Activated T-helper 2 cell treated with anti-CD3 and anti-CD28 coated beads, Interferon-gamma antibody, Interleukin-2, Interleukin-4, amounts not matched to agents 10 μg/mL and 5 μg/mL and 100 μg/mL, durations not matched to agents 14 hours and 24 hours and 36 hours (primary cell): ENCODE measurements at regions of chr2 and their contacts with region 1.

Region 1: DNA sequence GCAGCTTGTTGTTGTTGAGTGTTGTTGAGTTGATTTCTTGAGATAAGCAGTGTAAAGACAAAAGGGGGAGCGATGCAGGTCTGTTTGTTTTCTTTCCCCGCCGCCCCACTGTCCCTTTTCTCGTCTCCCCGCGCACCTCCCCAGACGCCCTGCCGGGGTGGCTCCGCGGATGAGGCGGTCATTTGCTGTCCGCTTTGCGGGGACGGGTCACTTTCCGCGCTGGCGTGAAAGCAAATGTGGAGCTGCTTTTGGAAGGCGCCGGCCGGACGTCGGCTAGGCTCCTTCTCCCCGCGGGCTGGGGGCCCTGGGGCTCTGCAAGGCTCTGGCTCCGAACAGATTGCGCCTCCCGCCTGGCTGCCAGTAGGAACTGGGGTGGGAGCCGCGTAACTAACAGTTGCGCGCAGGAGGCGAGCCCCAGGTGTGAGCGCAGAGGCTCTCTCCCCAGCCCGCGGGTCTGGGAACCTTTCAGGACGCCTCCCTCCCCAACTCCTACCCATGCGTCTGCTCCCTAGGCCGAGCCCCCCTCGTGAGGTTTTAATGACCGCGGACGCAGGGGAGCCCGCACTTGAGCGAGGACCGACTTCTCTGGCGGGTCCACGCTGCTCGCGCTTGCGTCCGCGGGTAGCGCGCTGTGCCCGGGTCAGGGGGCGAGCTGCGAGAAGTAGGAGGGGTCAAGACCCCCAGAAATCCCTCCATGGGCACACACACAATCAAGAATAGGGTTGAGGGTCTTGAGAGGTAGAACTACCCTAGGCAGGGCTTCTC is 146.6 kb downstream of the MEIS1 start:
- DNase-seq: no peak
- H3K4me3 Mint-ChIP-seq: no peak overlapping the region
- H3K27ac Mint-ChIP-seq: no peak overlapping the region
- H3K4me1 Mint-ChIP-seq: peaks cover 1% of the 10 kb centered on the region
- H3K27me3 Mint-ChIP-seq: peaks cover 45% of the 10 kb centered on the region

Region 2: DNA sequence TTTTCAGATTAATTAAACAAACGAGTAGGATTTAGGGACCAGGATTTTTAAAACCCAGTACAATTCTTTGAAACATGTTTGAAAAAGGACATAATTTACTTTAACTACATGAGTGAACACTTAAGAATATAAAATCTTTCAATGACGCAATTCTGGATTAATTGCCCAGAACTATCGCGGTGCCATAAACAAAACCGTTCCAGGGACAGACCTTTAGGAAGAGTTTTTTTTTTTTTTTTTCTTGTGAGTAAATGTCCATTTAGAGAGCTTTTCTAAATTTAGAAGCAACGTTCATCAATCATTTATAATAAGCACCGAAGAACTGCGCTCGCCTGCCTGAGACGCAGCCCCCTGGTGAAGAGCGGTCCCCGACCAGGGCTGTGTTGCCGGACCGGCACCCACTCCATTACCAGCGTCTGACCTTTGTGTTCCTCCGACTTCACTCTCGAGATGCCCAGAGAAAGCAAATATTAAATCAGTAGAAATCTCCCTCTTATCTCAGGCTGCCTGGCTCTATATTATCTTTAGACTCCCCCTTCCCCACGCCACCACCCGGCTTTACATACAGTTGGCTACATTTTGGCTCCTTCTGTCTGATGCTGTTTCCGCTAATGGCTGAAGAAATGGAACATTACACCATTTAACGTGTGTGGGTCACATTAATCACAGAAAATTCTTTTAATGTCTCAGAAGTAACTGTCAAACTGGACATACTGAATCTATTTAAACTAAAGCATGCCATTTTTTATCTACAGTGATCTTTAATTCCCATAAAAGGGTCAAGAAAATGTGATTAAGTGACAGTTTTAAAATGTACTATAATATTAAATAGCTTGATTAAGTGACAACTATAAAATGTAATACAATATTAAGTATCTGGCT is 510.6 kb before region 1 on chr2:
- intact Hi-C with region 1: no loop called
- DNase-seq: no peak
- H3K4me3 Mint-ChIP-seq: no peak overlapping the region
- H3K27ac Mint-ChIP-seq: no peak overlapping the region
- H3K4me1 Mint-ChIP-seq: no peaks in the 10 kb centered on the region
- H3K27me3 Mint-ChIP-seq: no peaks in the 10 kb centered on the region

Region 3: GRCh38 chr2:66434679-66435548 is 146.6 kb before region 1 on chr2 and contains the start of gene MEIS1:
- intact Hi-C with region 1: loop called (anchors 2 kb)
- DNase-seq: peak; percentile 31
- H3K4me3 Mint-ChIP-seq: peak within 1 kb of the TSS; percentile 82
- H3K27ac Mint-ChIP-seq: no peak within 1 kb of the TSS
- H3K4me1 Mint-ChIP-seq: peaks cover 21% of the 10 kb centered on the region
- H3K27me3 Mint-ChIP-seq: peaks cover 91% of the 10 kb centered on the region
- total RNA-seq, gene MEIS1: not detected in 2 replicates

Region 4: GRCh38 chr2:66781804-66782203 is 200.3 kb after region 1 on chr2:
- intact Hi-C with region 1: no loop called
- DNase-seq: no peak
- H3K4me3 Mint-ChIP-seq: no peak overlapping the region
- H3K27ac Mint-ChIP-seq: no peak overlapping the region
- H3K4me1 Mint-ChIP-seq: no peaks in the 10 kb centered on the region
- H3K27me3 Mint-ChIP-seq: no peaks in the 10 kb centered on the region

Region 5: GRCh38 chr2:68031542-68032160 is 1450.1 kb after region 1 on chr2:
- intact Hi-C with region 1: loop called (anchors 5 kb)
- DNase-seq: no peak
- H3K4me3 Mint-ChIP-seq: no peak overlapping the region
- H3K27ac Mint-ChIP-seq: no peak overlapping the region
- H3K4me1 Mint-ChIP-seq: no peaks in the 10 kb centered on the region
- H3K27me3 Mint-ChIP-seq: peaks cover 10% of the 10 kb centered on the region